ENCODE measurements at regions of chr4 and their contacts with region 1.

Region 1: GRCh38 chr4:138494931-138495330 is 252.8 kb upstream of the SLC7A11 start:
- DNase-seq: peak; percentile 4
- ATAC-seq: peak; percentile 93
- H3K4me3 ChIP-seq: no peak overlapping the region
- H3K27ac ChIP-seq: no peak overlapping the region
- H3K4me1 ChIP-seq: no peaks in the 10 kb centered on the region
- H3K27me3 ChIP-seq: no peaks in the 10 kb centered on the region
- CTCF ChIP-seq: peak; percentile 17 to 37 (median 34); a peak in 3 of 6 replicates
- EP300 ChIP-seq: no peak
- POLR2A ChIP-seq: no peak
- RAD21 ChIP-seq: peak; percentile 49

Region 2: DNA sequence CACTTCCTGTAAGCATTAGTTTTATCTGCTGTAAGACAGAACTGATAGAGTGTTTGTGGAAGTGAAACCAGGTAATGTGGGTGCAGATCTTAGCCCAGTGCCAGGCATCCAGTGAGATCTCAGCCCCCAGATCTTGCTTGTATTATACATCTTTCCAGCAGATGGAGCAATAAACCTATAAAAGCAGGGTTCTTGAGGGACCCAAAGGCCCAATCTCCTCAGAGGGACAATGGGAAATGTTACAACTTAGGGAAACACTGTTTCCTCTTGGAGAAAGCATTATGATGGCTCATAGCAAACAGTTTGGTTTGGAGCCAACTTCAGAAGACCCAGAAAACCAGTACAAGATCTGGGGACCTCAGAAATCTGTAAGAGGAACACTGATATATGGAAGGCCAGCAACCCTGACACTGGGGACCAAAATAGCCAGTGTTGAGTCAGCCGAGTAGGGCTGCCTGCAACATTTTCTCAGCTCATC is 459.1 kb before region 1 on chr4:
- CTCF ChIA-PET with region 1: interaction called, 15 read pairs
- POLR2A ChIA-PET with region 1: no interaction called
- RAD21 ChIA-PET with region 1: no interaction called
- SMC1A ChIA-PET with region 1: interaction called, 4 read pairs
- in situ Hi-C with region 1: no loop called
- intact Hi-C with region 1: no loop called
- DNase-seq: peak; percentile 69
- ATAC-seq: peak; percentile 100
- H3K4me3 ChIP-seq: no peak overlapping the region
- H3K27ac ChIP-seq: no peak overlapping the region
- H3K4me1 ChIP-seq: no peaks in the 10 kb centered on the region
- H3K27me3 ChIP-seq: no peaks in the 10 kb centered on the region
- CTCF ChIP-seq: peak; percentile 44 to 71 (median 64); a peak in 5 of 6 replicates
- EP300 ChIP-seq: 0 out of 4 replicates have a peak, but pooled peaks of 1 of the 2 experiments have one; percentile 43
- POLR2A ChIP-seq: no peak
- RAD21 ChIP-seq: peak; percentile 86